ENCODE measurements at regions of chr1 and their contacts with region 1.

Region 1: DNA sequence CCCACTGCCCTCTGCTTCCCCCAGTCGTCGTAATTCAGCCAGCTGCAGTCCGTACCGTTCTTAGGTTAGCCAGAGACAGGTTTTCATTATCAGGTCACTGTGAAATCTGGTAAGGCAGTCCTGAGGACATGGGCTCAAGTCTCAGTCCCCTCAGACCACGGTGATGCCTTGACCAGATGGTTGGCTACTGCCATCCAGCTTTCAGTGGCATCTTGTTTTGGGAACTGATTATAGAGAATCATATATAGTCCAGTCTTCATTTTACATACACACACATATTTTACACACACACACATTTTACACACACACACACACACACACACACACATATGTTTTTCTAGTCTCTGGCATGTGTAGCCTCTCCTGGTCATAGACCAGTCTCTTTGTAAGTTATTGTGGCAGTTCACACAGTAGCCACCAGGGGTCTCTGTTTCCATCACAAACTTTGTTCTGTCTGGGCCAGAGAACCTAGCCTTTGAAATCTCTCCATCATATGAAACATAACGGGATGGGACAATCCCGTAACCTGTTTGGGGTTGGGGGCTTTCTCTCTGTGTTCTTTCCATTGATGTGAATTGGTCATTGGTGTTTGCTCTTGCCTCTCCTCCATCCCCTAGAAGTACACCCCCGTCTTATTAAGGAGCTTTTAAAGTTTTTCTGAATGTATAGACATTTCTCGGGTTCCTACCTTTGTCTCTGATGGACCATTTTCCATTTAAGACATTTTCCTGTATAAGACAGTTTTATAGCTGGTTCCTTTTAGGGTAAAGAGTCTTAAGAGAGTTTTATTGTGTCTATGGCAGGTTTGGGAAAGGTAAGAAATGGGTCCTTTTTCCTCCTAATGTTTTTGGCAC is 8.4 kb upstream of the IKBKE start:
- DNase-seq: peak; percentile 81
- H3K4me3 Mint-ChIP-seq: no peak overlapping the region
- H3K27ac Mint-ChIP-seq: no peak overlapping the region
- H3K4me1 Mint-ChIP-seq: peaks cover 52% of the 10 kb centered on the region
- H3K27me3 Mint-ChIP-seq: no peaks in the 10 kb centered on the region

Region 2: GRCh38 chr1:206445116-206445515 is 16.7 kb before region 1 on chr1:
- CTCF ChIA-PET with region 1: interaction called, 10 read pairs
- POLR2A ChIA-PET with region 1: no interaction called
- intact Hi-C with region 1: no loop called
- DNase-seq: no peak
- H3K4me3 Mint-ChIP-seq: no peak overlapping the region
- H3K27ac Mint-ChIP-seq: no peak overlapping the region
- H3K4me1 Mint-ChIP-seq: peaks cover 5% of the 10 kb centered on the region
- H3K27me3 Mint-ChIP-seq: no peaks in the 10 kb centered on the region

Region 3: GRCh38 chr1:206479183-206480125 is 17.6 kb after region 1 on chr1:
- CTCF ChIA-PET with region 1: interaction called, 77 read pairs
- POLR2A ChIA-PET with region 1: no interaction called
- intact Hi-C with region 1: loop called (anchors 2 kb)
- DNase-seq: peak; percentile 79
- H3K4me3 Mint-ChIP-seq: no peak overlapping the region
- H3K27ac Mint-ChIP-seq: peak overlapping the region; percentile 26
- H3K4me1 Mint-ChIP-seq: peaks cover 37% of the 10 kb centered on the region
- H3K27me3 Mint-ChIP-seq: no peaks in the 10 kb centered on the region

Region 4: DNA sequence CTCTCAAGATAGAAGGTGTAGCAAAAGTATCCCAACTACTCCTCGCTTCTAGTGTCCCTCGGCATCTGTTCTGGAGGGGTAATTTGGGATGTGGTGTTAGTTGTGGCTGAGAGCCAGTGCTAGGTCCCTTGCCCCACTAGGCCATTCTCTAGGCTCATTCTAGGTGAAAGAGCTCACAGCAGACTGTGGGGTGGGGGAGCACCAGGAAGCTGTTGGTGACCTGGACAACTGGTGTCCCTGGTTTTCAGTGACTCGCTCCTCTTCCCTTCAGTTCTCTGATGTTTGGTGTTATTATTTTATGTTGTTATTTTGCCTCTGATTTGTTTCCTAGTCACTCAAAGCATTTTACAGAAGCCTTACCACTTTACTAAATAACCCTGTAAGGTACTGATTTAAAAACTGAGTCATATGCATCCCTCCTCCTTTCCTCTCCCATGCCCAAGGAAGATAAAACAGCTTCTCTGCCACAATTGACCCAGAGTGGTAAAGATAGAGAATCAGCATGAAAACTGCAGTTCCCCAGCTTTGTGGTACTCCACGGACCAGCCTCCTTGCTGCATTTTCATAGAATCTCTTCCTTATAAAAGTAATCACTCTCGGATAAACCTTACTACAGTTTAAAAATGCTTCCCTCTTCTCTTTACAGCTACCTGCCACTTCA is 187.6 kb after region 1 on chr1:
- CTCF ChIA-PET with region 1: no interaction called
- POLR2A ChIA-PET with region 1: no interaction called
- intact Hi-C with region 1: no loop called
- DNase-seq: no peak
- H3K4me3 Mint-ChIP-seq: no peak overlapping the region
- H3K27ac Mint-ChIP-seq: no peak overlapping the region
- H3K4me1 Mint-ChIP-seq: peaks cover 5% of the 10 kb centered on the region
- H3K27me3 Mint-ChIP-seq: no peaks in the 10 kb centered on the region

Measured in activated CD4-positive, alpha-beta memory T cell treated with anti-CD3 and anti-CD28 coated beads for 36 hours (primary cell).